AG04449 (cell line): ENCODE measurements at regions of chr13 and their contacts with region 1.

Region 1: GRCh38 chr13:114264886-114265611 is 16.4 kb upstream of the UPF3A start:
- DNase-seq: peak; percentile 66
- H3K4me3 ChIP-seq: no peak overlapping the region
- CTCF ChIP-seq: no peak

Region 2: DNA sequence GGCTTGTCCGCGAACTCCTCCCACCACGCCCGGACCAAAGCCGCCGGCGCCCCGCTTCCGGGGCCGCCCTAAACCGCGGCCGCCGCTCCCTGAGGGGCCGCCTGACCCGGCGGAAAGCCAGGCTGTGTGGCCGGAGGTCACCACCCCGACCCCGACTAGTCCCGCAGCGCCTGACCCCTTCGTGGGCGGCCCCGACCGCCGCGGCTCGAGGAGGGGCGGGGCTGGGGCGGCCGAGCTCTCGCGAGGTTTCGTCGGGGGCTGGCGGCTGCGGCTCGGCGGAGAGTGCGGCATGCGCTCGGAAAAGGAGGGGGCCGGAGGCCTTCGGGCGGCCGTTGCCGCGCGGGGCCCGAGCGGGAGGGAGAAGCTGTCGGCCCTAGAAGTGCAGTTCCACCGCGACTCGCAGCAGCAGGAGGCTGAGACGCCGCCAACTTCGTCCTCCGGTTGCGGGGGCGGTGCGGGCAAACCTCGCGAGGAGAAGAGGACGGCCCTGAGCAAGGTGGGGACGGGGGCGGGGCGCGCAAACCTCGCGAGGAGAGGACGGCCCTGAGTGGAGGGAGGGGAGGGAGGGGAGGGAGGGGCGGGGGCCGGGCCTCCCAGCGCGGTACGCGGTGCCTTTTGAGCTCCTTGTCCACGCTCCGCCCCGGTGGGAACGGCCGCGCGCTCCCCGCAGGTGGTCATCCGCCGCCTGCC is 16.4 kb after region 1 on chr13 and contains the start of gene UPF3A:
- CTCF ChIA-PET with region 1: interaction called, 3 read pairs
- POLR2A ChIA-PET with region 1: interaction called, 14 read pairs
- DNase-seq: no peak
- H3K4me3 ChIP-seq: peak within 1 kb of the TSS; percentile 75
- CTCF ChIP-seq: no peak

Region 3: GRCh38 chr13:114319441-114319913 is 54.4 kb after region 1 on chr13:
- CTCF ChIA-PET with region 1: no interaction called
- POLR2A ChIA-PET with region 1: interaction called, 10 read pairs
- DNase-seq: peak; percentile 73
- H3K4me3 ChIP-seq: no peak overlapping the region
- CTCF ChIP-seq: no peak